Activated naive CD4-positive, alpha-beta T cell treated with anti-CD3 and anti-CD28 coated beads, Interleukin-2, amount 10 ng/mL, durations not matched to agents 7 days and 5 days (primary cell): ENCODE measurements at regions of chr2 and their contacts with region 1.

Region 1: GRCh38 chr2:213151437-213152064 is at the start of gene IKZF2:
- DNase-seq: peak; percentile 67
- H3K4me3 Mint-ChIP-seq: peak within 1 kb of the TSS; percentile 82
- H3K27ac Mint-ChIP-seq: peak within 1 kb of the TSS; percentile 85
- H3K4me1 Mint-ChIP-seq: peaks cover 32% of the 10 kb centered on the region
- H3K27me3 Mint-ChIP-seq: peaks cover 54% of the 10 kb centered on the region

Region 2: DNA sequence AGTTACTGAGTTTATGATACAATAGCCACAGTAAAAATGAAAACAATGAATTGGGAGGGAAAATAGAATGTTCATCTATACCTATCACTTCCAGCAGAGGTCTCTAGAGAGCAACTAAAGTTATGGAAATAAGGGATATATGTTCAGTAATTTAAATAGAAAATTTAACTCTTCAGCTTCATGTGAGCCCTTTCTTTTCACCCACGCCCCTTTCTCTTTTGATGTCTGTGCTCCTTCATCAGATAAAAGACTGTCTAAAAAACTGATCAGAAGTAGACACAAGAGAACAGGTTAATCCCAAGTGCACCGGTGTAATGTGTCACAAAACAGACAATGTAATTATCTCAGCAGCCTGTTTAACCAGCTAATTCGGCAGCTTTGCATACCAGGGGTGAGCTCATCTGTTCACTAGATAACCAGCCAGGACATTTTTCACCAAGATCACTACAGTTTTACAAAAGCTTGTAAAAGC is 374.5 kb before region 1 on chr2:
- CTCF ChIA-PET with region 1: interaction called, 19 read pairs
- DNase-seq: no peak
- H3K4me3 Mint-ChIP-seq: no peak overlapping the region
- H3K27ac Mint-ChIP-seq: no peak overlapping the region
- H3K4me1 Mint-ChIP-seq: no peaks in the 10 kb centered on the region
- H3K27me3 Mint-ChIP-seq: no peaks in the 10 kb centered on the region

Region 3: DNA sequence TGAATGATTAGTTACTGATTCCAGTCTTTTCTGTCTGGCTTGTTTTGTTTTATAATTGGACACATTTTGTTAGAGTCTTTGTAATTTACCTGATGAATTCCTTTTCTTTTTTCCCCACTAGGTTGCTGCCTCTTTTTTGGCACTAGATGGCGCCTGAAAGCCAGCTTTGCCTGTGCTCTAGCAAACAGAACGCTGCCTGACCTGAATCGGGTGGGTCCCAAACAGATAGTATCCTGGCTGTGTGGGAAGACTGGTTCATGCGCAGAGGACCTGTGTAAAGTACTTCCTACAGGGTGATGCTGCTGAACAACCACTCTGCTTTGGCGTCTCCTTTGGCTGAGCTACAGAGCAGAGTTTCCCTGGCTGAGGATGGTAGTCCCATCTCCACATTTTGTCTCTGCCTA is 288.4 kb before region 1 on chr2:
- CTCF ChIA-PET with region 1: interaction called, 18 read pairs
- DNase-seq: peak; percentile 24
- H3K4me3 Mint-ChIP-seq: no peak overlapping the region
- H3K27ac Mint-ChIP-seq: no peak overlapping the region
- H3K4me1 Mint-ChIP-seq: no peaks in the 10 kb centered on the region
- H3K27me3 Mint-ChIP-seq: no peaks in the 10 kb centered on the region

Region 4: DNA sequence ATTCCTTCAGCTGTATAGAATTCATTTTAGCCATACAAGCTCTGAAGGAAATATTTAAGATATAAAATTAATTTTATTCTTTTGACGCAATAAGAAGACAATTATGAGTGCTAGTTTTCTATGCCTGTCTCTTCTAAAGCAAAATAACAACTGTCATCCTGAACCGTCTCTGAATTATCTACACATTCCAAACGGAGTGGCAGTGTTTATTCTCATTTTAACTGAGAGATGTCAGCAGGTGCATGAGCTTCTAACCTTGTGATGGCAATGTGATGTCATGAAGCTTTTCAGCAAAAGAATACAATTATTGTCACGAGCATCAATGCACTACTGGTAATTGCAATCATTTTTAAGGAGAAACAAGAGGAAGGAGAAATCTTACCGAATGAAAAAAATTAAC is 407.5 kb after region 1 on chr2:
- CTCF ChIA-PET with region 1: no interaction called
- DNase-seq: no peak
- H3K4me3 Mint-ChIP-seq: no peak overlapping the region
- H3K27ac Mint-ChIP-seq: no peak overlapping the region
- H3K4me1 Mint-ChIP-seq: no peaks in the 10 kb centered on the region
- H3K27me3 Mint-ChIP-seq: no peaks in the 10 kb centered on the region